Activated CD4-positive, alpha-beta memory T cell treated with anti-CD3 and anti-CD28 coated beads for 36 hours (primary cell): ENCODE measurements at regions of chr6 and their contacts with region 1.

Region 1: GRCh38 chr6:32796848-32797776 is 19.7 kb downstream of the HLA-DOB start:
- DNase-seq: peak; percentile 84
- H3K4me3 Mint-ChIP-seq: peak overlapping the region; percentile 38
- H3K27ac Mint-ChIP-seq: no peak overlapping the region
- H3K4me1 Mint-ChIP-seq: peaks cover 16% of the 10 kb centered on the region
- H3K27me3 Mint-ChIP-seq: peaks cover 54% of the 10 kb centered on the region

Region 2: DNA sequence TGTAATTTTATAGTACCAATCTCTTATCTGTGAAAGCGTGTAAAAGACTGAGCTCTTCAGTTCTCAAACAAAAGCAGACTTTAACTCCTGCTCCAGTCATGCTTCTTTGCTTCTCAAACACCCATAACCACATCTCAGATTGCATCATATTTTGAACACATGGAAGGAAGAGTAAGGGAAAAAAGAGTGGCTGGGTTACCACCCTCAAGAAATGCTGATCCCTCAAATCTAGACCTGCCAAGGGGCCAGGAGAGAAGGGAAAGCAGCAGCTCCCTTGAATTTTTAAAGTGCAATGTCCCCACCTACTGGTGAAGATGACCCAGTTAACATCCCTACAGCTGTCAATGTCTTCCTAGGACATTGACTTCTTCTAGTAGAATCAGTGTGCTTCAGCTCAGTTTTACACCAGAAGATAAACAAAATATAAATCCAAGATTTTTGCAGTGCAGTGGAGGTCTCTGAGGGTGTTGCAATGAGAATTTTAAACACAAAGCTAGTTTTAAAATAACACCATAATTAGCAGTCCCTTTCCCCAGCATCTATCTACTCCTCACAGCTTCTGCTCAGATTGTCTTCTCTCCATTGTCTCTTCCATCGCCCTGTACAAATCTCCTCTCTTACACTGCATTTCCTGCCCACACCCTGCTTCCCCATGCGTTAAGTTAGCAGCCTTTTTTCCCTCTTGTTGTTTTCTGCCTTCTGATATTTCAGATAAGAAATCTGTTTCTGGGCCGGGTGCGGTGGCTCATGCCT is 11.2 kb before region 1 on chr6:
- CTCF ChIA-PET with region 1: interaction called, 11 read pairs
- POLR2A ChIA-PET with region 1: no interaction called
- intact Hi-C with region 1: no loop called
- DNase-seq: peak; percentile 21
- H3K4me3 Mint-ChIP-seq: no peak overlapping the region
- H3K27ac Mint-ChIP-seq: no peak overlapping the region
- H3K4me1 Mint-ChIP-seq: no peaks in the 10 kb centered on the region
- H3K27me3 Mint-ChIP-seq: peaks cover 42% of the 10 kb centered on the region